Ascending aorta (tissue), 2 donors: ENCODE measurements at regions of chr11 and their contacts with region 1.

Region 1: DNA sequence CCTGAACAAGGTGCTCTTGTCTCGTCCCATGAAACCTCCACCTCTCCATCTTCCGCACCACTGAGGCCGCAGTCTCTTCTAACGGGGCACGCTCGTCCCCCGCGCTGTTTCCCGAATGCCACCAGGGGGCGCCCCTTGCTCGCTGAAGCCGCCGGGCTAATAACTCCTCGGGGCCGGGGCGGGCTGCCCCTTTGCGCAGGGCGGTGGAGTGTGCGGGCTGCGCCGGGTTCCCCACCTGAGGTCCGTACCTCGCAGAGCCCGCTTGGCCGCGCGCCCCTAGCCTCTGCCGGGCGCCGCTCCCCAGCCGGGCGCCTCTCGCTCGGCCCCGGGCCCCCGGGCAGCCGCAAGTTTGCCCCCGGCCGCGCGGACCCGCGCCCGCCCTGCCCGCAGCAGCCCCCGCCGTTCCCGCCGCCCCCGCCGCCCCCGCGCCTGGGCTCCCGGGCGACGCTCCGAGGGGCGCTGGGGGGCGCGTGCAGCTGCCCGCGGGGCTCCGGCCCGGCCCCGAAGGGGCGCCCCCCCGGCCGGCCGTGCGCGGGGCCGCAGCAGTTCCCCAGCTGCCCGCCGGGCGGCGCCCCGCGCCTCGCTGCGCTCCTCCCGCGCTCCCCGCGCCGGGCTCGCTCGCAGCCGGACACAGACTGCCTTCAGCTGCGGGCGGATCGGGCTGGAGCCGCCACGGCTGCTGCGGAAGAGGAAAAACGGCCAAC is at the start of gene GRIK4:
- DNase-seq: peak in 1 of 2 donors; percentile 85
- H3K4me3 ChIP-seq: peak within 1 kb of the TSS; percentile 50 to 67
- H3K27ac ChIP-seq: no peak within 1 kb of the TSS
- H3K4me1 ChIP-seq: no peaks in the 10 kb centered on the region
- H3K27me3 ChIP-seq: no peaks in the 10 kb centered on the region
- CTCF ChIP-seq: peak; percentile 91 to 97 (median 91)
- total RNA-seq, gene GRIK4: not detected

Region 2: GRCh38 chr11:120682866-120683265 is 171.6 kb after region 1 on chr11:
- intact Hi-C with region 1: loop called (anchors 1 kb)
- DNase-seq: no peak
- H3K4me3 ChIP-seq: no peak overlapping the region
- H3K27ac ChIP-seq: no peak overlapping the region
- H3K4me1 ChIP-seq: no peaks in the 10 kb centered on the region
- H3K27me3 ChIP-seq: no peaks in the 10 kb centered on the region
- CTCF ChIP-seq: no peak

Region 3: GRCh38 chr11:120952461-120953434 is 441.5 kb after region 1 on chr11:
- intact Hi-C with region 1: loop called (anchors 1 kb)
- DNase-seq: peak in 1 of 2 donors; percentile 65
- H3K4me3 ChIP-seq: no peak overlapping the region
- H3K27ac ChIP-seq: no peak overlapping the region
- H3K4me1 ChIP-seq: no peaks in the 10 kb centered on the region
- H3K27me3 ChIP-seq: no peaks in the 10 kb centered on the region
- CTCF ChIP-seq: peak; percentile 30 to 71 (median 51)

Region 4: DNA sequence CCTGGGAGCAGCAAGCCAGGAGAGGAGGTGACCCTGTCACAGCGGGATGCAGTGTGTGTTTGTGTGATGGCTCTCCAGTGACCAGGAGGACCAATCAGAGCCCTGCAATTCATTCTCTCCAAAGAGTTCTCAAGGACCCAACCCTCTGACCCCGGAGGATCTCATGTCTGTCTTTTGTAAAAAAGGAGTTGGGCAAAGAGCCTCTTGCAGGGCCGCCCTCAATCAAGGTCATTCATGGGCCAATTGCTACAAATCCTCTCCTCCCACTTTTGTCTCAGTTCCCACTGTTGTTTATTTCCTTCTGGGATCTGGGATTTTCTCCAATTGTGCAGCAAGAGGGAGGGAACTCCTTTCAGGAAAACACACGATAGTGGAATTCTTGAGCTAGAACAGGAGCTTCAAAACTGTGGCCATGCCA is 593.8 kb after region 1 on chr11:
- intact Hi-C with region 1: loop called (anchors 5 kb)
- DNase-seq: no peak
- H3K4me3 ChIP-seq: no peak overlapping the region
- H3K27ac ChIP-seq: no peak overlapping the region
- H3K4me1 ChIP-seq: no peaks in the 10 kb centered on the region
- H3K27me3 ChIP-seq: no peaks in the 10 kb centered on the region
- CTCF ChIP-seq: no peak

Region 5: GRCh38 chr11:121194731-121195596 is 683.7 kb after region 1 on chr11:
- intact Hi-C with region 1: loop called (anchors 5 kb)
- DNase-seq: no peak
- H3K4me3 ChIP-seq: no peak overlapping the region
- H3K27ac ChIP-seq: no peak overlapping the region
- H3K4me1 ChIP-seq: no peaks in the 10 kb centered on the region
- H3K27me3 ChIP-seq: no peaks in the 10 kb centered on the region
- CTCF ChIP-seq: peak; percentile 32 to 81 (median 76)